ENCODE measurements at regions of chr11 and their contacts with region 1.

Region 1: DNA sequence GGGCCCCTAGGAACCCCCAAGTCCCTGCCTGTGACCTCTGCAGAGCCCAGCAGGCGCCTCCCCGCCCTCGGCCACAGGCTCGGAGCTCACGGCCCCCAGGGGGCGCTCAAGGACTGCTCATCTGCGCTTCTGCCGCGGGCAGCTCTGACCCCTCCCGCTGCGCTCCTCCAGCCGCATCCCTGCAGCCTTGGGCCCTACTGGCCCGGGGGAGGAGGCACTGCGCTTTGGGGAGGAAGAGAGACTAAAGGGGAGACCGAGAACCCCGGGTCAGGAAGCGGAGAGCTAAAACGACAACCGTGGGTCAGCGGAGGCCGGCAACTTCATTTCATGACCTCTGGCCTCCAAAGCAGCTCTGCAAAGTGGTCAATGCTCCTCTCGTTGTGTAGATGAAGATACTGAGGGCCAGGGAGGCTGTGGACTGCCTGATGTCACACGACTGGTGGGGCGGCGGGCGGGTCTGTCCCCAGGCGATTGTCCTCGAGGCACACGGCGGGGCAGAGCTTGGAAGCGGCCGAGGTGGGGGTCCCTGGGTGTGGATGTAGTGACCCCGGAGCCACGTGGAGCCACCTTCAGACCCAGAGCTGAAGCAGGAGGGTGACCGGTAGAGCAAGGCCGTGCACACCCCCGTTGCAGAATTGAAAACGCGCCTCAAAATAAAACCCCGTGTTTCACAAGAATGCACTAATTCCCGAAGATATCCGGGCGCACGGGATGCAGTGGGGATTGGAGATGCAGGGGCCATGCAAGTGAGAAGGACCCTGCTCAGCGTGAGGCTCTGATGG is 2.7 kb upstream of the KRTAP5-6 start:
- DNase-seq: peak; percentile 45
- H3K4me3 ChIP-seq: no peak overlapping the region
- H3K27ac ChIP-seq: no peak overlapping the region
- H3K27me3 ChIP-seq: peaks cover 24% of the 10 kb centered on the region
- CTCF ChIP-seq: peak; percentile 87

Region 2: DNA sequence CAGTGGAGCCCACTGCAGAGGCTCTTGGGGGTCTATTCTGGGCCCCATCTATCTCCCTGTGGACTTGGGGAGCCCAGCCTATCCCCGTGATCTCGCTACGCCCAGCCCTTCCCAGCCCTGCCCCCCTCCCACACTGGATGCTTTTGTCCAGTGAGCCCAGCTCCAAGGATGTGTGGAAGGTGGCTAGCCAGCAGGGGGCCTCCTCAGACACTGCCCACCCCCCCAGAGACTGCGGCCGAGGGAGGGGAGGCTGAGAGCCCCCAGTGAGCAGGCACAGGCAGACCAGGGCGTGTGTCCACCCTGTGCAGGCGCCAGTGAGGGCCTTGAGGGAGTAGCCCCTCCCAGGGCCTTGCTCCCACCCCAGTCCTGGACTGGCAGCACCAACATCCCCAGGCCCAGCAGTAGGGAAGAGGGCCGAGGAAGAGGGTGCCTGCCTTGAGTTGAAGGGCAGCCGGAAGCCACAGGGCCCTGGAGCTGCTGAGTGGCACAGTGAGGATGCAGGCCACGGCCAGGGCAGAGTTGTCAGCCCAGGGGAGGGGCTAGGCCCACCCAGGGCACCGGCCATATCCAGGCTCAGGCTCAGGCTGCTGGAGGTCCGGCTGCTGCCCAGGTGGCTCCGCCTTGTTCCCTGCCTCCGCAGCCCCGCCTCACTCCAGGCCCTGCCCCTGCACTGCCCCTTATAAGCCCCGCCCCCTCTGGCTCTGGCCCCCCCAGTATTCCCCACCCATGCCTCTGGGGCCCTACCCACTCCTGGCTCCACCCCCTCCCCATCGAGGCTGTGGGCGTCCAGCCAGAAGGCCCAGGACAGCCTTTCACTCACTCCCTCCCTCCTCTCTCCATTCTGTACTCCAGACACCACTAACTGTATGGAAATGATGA is 235.7 kb before region 1 on chr11:
- CTCF ChIA-PET with region 1: no interaction called
- POLR2A ChIA-PET with region 1: no interaction called
- DNase-seq: no peak
- H3K4me3 ChIP-seq: no peak overlapping the region
- H3K27ac ChIP-seq: no peak overlapping the region
- H3K27me3 ChIP-seq: peaks cover 5% of the 10 kb centered on the region
- CTCF ChIP-seq: peak; percentile 41

Region 3: DNA sequence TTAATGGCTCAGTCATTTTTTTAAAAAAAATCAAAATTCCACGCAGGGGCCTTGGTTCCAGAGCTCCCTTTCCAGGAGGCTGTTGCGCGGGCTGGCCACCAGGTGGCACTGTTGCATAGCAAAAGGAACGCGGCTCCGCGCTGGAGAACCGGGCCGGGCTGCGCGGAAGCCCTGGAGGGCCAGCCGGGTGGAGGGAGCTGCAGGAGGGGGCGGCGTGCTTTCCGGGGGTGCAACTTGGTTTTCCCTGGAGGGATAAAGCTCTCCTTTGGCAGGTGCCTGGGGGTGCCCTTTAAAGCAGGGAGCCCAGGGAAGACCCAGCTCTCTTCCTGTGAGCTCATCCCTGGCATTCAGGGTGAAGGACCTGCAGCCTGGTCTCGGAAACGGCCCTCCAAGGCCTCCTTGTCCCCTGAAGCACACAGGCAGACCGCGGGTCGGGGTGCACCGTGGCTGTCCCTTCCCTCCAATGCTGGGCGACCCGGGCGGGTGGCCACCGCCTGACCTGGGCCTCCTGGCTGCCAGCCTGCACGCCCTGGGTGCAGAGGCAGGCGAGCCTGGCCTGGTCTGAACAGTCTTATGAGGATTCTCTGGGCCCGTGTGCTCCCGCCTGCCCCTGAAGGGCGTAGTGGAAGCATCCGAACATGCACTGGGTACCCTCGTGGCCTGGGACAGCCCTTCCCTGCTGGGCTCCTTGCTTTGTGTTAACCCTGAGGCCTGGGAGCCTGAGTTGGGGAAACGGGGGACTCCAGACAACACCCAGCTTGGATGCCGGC is 41.3 kb before region 1 on chr11:
- CTCF ChIA-PET with region 1: interaction called, 82 read pairs
- POLR2A ChIA-PET with region 1: interaction called, 3 read pairs
- DNase-seq: peak; percentile 7
- H3K4me3 ChIP-seq: no peak overlapping the region
- H3K27ac ChIP-seq: no peak overlapping the region
- H3K27me3 ChIP-seq: peaks cover 39% of the 10 kb centered on the region
- CTCF ChIP-seq: peak; percentile 91

Region 4: GRCh38 chr11:1682225-1682905 is 11.9 kb before region 1 on chr11:
- CTCF ChIA-PET with region 1: interaction called, 54 read pairs
- POLR2A ChIA-PET with region 1: interaction called, 3 read pairs
- DNase-seq: no peak
- H3K4me3 ChIP-seq: no peak overlapping the region
- H3K27ac ChIP-seq: no peak overlapping the region
- H3K27me3 ChIP-seq: peaks cover 4% of the 10 kb centered on the region
- CTCF ChIP-seq: no peak

Region 5: DNA sequence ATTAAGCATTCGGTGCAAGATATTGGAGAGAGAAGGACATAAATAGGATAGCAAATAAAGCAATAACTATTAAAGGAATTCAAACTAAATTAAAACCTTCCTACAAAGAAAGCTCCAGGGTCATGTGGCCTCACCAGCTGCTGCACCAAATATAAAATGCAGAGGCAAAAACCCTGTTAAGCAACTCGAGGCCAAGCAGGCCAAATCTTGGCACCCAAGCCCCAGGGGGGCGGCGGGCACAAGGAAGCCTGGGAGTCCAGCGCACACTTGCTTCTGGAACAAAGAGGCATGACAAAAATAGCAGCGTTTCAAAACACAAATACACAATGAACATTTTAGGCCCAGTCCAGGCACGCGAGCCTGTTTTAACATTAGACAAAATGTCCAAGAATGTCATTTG is 23.5 kb after region 1 on chr11:
- CTCF ChIA-PET with region 1: interaction called, 11 read pairs
- POLR2A ChIA-PET with region 1: no interaction called
- DNase-seq: no peak
- H3K4me3 ChIP-seq: no peak overlapping the region
- H3K27ac ChIP-seq: no peak overlapping the region
- H3K27me3 ChIP-seq: peaks cover 8% of the 10 kb centered on the region
- CTCF ChIP-seq: no peak

Region 6: GRCh38 chr11:1827095-1827813 is 133.0 kb after region 1 on chr11:
- CTCF ChIA-PET with region 1: interaction called, 300 read pairs
- POLR2A ChIA-PET with region 1: interaction called, 8 read pairs
- DNase-seq: no peak
- H3K4me3 ChIP-seq: no peak overlapping the region
- H3K27ac ChIP-seq: no peak overlapping the region
- H3K27me3 ChIP-seq: peaks cover 9% of the 10 kb centered on the region
- CTCF ChIP-seq: no peak

Region 7: GRCh38 chr11:1837171-1838076 is 143.2 kb after region 1 on chr11:
- CTCF ChIA-PET with region 1: interaction called, 300 read pairs
- POLR2A ChIA-PET with region 1: interaction called, 8 read pairs
- DNase-seq: no peak
- H3K4me3 ChIP-seq: no peak overlapping the region
- H3K27ac ChIP-seq: no peak overlapping the region
- H3K27me3 ChIP-seq: peaks cover 8% of the 10 kb centered on the region
- CTCF ChIP-seq: peak; percentile 90

Region 8: DNA sequence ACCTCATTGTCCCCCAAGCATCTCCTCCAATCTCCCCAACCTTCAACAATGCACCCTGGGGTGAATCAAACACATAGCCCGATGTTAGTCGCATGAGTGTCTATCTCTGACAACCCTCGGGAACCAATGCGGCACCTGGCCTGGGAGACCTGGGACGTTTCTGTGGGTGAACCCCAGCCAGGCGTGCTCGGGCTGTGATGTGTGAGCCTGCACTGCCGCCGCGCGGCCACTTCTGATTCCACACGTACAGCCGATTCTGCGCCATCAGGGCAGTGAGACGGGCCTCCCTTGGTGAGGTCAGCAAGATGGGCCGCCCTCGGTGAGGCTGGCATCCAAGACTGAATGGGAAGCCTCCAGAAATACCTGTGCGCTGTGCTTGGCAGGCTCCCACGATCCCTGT is 308.6 kb after region 1 on chr11:
- CTCF ChIA-PET with region 1: interaction called, 63 read pairs
- POLR2A ChIA-PET with region 1: no interaction called
- DNase-seq: no peak
- H3K4me3 ChIP-seq: no peak overlapping the region
- H3K27ac ChIP-seq: no peak overlapping the region
- H3K27me3 ChIP-seq: no peaks in the 10 kb centered on the region
- CTCF ChIP-seq: no peak

Measured in AG04450 (cell line).